ENCODE measurements at regions of chr11 and their contacts with region 1.

Region 1: GRCh38 chr11:47609675-47610074 is 15.5 kb upstream of the C1QTNF4 start:
- DNase-seq: no peak
- ATAC-seq: no peak
- H3K4me3 Mint-ChIP-seq: no peak overlapping the region
- H3K27ac Mint-ChIP-seq: no peak overlapping the region
- H3K4me1 Mint-ChIP-seq: no peaks in the 10 kb centered on the region
- H3K27me3 Mint-ChIP-seq: no peaks in the 10 kb centered on the region; the same call in 1 of the 2 replicates
- CTCF ChIP-seq: no peak

Region 2: DNA sequence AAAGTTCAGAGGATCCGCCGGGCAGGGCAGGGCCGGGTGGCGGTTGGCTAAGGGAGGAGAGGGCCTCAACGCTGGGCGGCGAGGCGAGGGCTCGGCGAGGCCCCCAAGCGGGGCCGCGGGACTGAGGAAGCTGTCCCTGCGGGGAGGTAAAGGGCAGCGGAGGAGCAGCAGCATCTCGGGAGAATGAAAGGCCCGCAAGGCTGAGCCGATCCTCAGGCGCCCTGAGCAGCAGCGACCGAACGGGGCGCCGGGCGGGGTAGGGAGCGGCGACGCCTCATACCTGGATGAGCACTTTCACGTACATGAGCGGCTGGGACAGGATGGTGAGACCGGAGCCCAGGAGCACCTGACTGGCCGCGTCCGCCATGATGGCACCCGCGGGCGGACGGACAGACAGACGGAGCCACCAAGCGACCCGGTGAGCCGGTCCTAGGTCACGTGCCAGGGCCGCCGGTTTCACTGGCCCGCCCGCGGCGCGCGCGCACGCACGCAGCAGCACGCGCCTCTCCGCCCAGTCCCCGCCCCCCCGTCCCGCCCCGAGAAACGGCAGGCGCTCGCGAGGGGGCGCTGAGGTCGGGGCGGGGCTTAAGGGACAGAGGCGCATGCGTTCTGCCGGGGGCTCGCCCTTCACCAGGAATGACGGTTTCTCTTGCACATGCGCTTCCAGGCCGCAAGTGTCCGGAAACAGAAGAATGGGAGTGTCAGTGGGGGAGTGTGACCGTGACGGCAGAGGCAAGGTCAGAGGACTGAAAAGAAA is 32.6 kb after region 1 on chr11 and contains the start of gene MTCH2:
- CTCF ChIA-PET with region 1: no interaction called
- POLR2A ChIA-PET with region 1: interaction called, 10 read pairs
- DNase-seq: peak; percentile 93
- ATAC-seq: peak; percentile 95
- H3K4me3 Mint-ChIP-seq: peak within 1 kb of the TSS; percentile 85
- H3K27ac Mint-ChIP-seq: peak within 1 kb of the TSS; percentile 98
- H3K4me1 Mint-ChIP-seq: peaks cover 11% of the 10 kb centered on the region
- H3K27me3 Mint-ChIP-seq: no peaks in the 10 kb centered on the region; the same call in 1 of the 2 replicates
- CTCF ChIP-seq: no peak
- total RNA-seq, gene MTCH2: 141 to 160 TPM (median 141 TPM) in 3 replicates